B cell (primary cell): ENCODE measurements at regions of chr10 and their contacts with region 1.

Region 1: DNA sequence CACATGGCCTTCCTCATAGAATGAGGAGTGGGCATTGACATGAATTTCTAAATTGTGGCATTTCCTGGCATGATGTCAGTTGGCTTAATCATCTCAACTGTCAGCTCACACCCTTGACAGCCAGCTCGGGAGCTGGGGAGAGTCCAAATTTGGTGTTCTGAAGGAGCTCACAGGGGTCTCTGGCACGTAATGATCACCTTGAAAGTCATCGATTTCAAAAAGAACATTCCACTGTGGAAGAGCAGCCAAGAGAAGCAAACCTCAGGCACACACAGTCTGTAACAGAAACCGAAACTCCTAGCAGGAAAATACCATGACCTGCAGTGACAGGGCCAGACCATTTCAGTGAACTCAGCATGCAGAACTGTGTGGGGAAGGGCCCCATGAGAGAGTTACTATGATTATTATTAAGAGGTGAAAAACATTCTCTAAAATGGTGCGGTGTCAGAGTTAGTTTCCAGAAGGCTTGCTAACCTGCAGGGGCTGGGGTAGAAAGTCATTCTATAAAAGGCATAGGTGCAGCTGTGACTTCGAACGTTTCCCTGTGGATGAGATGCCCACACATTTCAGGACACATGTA is 26.4 kb upstream of the KLF6 start:
- DNase-seq: peak; percentile 75
- ATAC-seq: peak; percentile 95
- H3K4me3 ChIP-seq: peak overlapping the region in 3 of 5 experiments; percentile 6 to 32 (median 18)
- H3K4me3 Mint-ChIP-seq: peak overlapping the region; percentile 76
- H3K27ac ChIP-seq: peak overlapping the region; percentile 63 to 66
- H3K27ac Mint-ChIP-seq: peak overlapping the region; percentile 90
- H3K4me1 ChIP-seq: peaks cover 28 to 33% of the 10 kb centered on the region in 2 donors
- H3K4me1 Mint-ChIP-seq: peaks cover 41% of the 10 kb centered on the region
- H3K27me3 ChIP-seq: no peaks in the 10 kb centered on the region
- H3K27me3 Mint-ChIP-seq: no peaks in the 10 kb centered on the region
- CTCF ChIP-seq: no peak

Region 2: DNA sequence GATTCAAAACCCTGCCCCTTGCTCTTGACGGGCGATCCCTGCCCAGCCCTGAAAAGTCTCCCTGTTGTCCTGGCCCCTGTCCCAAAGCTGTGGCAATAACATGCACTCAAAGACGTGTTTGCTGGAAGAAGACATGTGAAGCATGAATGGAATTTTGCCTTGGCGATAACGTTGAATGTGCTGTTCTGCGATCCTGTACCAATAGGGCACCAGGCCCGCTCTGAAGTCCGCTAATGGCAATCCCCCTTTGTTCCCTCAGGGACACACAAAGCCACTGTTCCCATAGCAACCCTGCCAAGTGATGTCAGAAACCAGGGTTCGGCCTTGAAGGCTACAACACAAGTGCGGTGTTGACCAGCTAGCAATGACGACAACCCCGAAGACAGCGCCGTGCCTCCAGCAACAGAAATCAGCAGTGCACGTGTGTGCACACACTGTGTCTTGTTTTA is 310.9 kb before region 1 on chr10:
- CTCF ChIA-PET with region 1: no interaction called
- POLR2A ChIA-PET with region 1: no interaction called
- intact Hi-C with region 1: no loop called
- DNase-seq: no peak
- ATAC-seq: no peak
- H3K4me3 ChIP-seq: no peak overlapping the region
- H3K4me3 Mint-ChIP-seq: no peak overlapping the region
- H3K27ac ChIP-seq: no peak overlapping the region
- H3K27ac Mint-ChIP-seq: no peak overlapping the region
- H3K4me1 ChIP-seq: no peaks in the 10 kb centered on the region
- H3K4me1 Mint-ChIP-seq: no peaks in the 10 kb centered on the region
- H3K27me3 ChIP-seq: no peaks in the 10 kb centered on the region
- H3K27me3 Mint-ChIP-seq: peaks cover 18% of the 10 kb centered on the region
- CTCF ChIP-seq: no peak

Region 3: DNA sequence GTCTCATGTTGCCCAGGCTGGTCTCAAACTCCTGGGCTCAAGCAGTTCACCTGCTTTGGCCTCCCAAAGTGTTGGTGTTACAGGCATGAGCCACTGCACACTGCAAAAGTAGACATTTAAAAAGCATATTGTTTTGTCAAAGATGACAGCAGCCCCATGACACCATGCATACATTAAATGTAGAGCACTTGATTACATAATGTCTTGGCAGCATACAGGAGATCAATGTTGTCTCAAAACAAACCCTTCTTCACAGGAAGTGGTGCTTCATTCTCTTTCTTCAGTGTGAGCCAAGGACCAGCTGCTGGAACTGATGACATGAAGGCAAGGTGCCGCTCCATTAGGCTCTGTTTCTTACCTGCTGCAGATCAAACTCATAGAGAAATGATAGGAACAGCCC is 244.8 kb before region 1 on chr10:
- CTCF ChIA-PET with region 1: no interaction called
- POLR2A ChIA-PET with region 1: no interaction called
- intact Hi-C with region 1: no loop called
- DNase-seq: no peak
- ATAC-seq: no peak
- H3K4me3 ChIP-seq: no peak overlapping the region
- H3K4me3 Mint-ChIP-seq: no peak overlapping the region
- H3K27ac ChIP-seq: no peak overlapping the region
- H3K27ac Mint-ChIP-seq: no peak overlapping the region
- H3K4me1 ChIP-seq: no peaks in the 10 kb centered on the region
- H3K4me1 Mint-ChIP-seq: no peaks in the 10 kb centered on the region
- H3K27me3 ChIP-seq: no peaks in the 10 kb centered on the region
- H3K27me3 Mint-ChIP-seq: no peaks in the 10 kb centered on the region
- CTCF ChIP-seq: no peak

Region 4: DNA sequence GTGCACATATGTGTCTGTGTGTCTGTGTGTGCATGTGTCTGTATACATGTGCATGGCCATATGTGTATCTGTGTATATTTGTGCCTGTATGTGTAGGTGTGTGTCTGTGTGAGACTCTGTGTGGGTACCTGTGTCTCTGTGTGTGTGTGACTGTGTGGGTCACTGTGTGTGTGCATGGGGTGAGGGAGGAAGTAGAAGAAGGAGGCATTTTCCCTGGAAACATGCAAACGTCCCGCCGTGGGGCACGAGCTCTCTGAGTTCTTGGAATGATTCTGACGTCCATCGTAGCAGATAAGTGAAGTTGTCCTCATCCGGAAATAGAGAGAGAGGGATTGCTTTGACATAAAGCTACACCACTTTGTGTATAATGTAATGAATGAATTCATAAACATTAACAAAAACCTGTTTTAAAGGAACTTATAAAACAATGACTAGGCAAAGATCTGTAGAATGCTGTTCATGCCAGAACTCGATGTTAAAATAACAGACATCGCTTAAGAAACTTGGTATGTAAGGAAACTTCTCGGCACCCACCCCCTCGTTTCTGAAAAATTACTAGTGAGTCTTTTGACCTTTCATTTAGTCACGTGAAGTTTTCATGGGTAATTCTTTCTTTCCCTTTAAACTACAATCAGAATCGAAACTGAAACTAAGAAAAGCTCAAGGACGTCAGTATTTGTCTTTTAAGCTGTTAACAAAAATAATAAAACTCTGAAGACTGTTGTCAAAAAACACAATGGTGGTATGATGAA is 17.2 kb after region 1 on chr10:
- CTCF ChIA-PET with region 1: interaction called, 3 read pairs
- POLR2A ChIA-PET with region 1: no interaction called
- intact Hi-C with region 1: loop called (anchors 1 kb)
- DNase-seq: peak; percentile 65
- ATAC-seq: peak; percentile 43
- H3K4me3 ChIP-seq: peak overlapping the region; percentile 39 to 66 (median 53)
- H3K4me3 Mint-ChIP-seq: peak overlapping the region; percentile 78
- H3K27ac ChIP-seq: peak overlapping the region; percentile 28 to 39
- H3K27ac Mint-ChIP-seq: peak overlapping the region; percentile 57
- H3K4me1 ChIP-seq: peaks cover 11 to 15% of the 10 kb centered on the region in 2 donors
- H3K4me1 Mint-ChIP-seq: peaks cover 20% of the 10 kb centered on the region
- H3K27me3 ChIP-seq: no peaks in the 10 kb centered on the region
- H3K27me3 Mint-ChIP-seq: no peaks in the 10 kb centered on the region
- CTCF ChIP-seq: no peak

Region 5: DNA sequence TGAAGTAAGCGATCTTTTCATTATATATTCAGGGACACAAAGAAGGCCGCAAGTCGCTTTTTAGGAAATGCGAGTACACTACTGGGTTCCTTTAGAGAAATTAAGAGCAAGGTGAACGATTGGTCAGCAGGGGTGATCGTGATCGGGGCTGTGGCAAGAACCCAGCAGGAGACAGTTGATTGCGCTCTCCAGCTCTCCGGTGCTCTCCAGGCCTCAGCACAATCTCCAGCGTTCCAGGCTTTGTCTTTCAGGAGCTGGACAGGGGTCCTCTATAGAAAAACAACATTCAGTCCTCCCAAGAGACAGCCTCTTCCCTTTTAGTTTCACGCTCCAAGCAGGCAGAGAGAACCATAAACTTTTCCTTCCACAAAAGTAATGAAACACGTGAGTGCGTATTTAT is 144.1 kb after region 1 on chr10:
- CTCF ChIA-PET with region 1: no interaction called
- POLR2A ChIA-PET with region 1: no interaction called
- intact Hi-C with region 1: no loop called
- DNase-seq: no peak
- ATAC-seq: no peak
- H3K4me3 ChIP-seq: no peak overlapping the region
- H3K4me3 Mint-ChIP-seq: no peak overlapping the region
- H3K27ac ChIP-seq: no peak overlapping the region
- H3K27ac Mint-ChIP-seq: no peak overlapping the region
- H3K4me1 ChIP-seq: peaks cover 10 to 11% of the 10 kb centered on the region in 2 donors
- H3K4me1 Mint-ChIP-seq: peaks cover 14% of the 10 kb centered on the region
- H3K27me3 ChIP-seq: no peaks in the 10 kb centered on the region
- H3K27me3 Mint-ChIP-seq: peaks cover 5% of the 10 kb centered on the region
- CTCF ChIP-seq: no peak

Region 6: DNA sequence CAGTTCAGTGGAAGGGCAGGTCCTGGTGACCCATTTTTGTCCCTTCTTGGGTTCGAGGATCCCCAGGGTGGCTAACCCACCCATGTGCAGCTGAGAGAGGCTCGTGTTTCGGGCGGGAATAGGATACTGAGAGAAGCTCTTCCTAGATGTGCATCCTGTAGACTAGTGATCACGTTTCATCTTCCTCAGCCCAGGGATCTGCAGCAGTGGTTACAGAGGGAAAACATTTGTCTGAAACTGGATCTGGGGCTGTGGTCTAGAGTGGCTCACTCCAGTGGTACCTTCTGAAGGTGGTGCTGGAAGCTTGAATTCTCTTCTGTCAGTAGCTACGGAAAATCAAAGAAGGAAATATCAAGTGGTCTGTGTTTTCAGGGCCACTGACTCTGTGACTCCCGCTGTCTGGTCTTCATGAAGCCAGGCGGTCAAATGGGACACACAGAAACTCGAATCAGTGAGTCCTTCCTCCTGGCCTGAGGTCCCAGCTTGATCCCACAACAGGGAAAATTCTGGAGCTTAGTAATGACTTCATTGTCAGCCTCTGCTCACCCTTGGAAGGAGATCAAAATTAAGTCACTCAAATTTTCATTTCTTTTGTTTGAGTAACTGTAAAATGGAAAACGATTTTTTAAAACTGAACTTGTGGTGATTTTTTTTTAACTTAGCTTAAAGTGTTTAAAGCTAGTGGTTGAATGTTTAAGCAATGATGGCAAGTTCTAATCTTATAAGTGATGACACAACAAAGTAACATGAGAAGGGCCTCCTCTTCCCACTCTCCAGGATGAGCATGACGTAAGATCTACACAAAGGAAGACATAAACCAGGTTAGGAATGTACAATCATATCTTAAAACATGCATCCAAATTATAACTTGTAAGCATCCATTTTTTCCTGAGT is 443.0 kb after region 1 on chr10:
- CTCF ChIA-PET with region 1: no interaction called
- POLR2A ChIA-PET with region 1: no interaction called
- intact Hi-C with region 1: no loop called
- DNase-seq: no peak
- ATAC-seq: no peak
- H3K4me3 ChIP-seq: no peak overlapping the region
- H3K4me3 Mint-ChIP-seq: no peak overlapping the region
- H3K27ac ChIP-seq: no peak overlapping the region
- H3K27ac Mint-ChIP-seq: no peak overlapping the region
- H3K4me1 ChIP-seq: no peaks in the 10 kb centered on the region
- H3K4me1 Mint-ChIP-seq: no peaks in the 10 kb centered on the region
- H3K27me3 ChIP-seq: peaks cover 0 to 6% (median 0%) of the 10 kb centered on the region in 4 experiments
- H3K27me3 Mint-ChIP-seq: peaks cover 4% of the 10 kb centered on the region
- CTCF ChIP-seq: no peak